ENCODE measurements at regions of chr22 and their contacts with region 1.

Region 1: GRCh38 chr22:49827853-49828598 is at the start of gene BRD1:
- DNase-seq: peak; percentile 65
- H3K4me3 Mint-ChIP-seq: peak within 1 kb of the TSS; percentile 85
- H3K27ac Mint-ChIP-seq: peak within 1 kb of the TSS; percentile 71
- H3K4me1 Mint-ChIP-seq: peaks cover 22% of the 10 kb centered on the region
- H3K27me3 Mint-ChIP-seq: no peaks in the 10 kb centered on the region
- CTCF ChIP-seq: no peak
- total RNA-seq, gene BRD1: 38.8 and 41.4 TPM in 2 replicates

Region 2: GRCh38 chr22:49776891-49777290 is 51.1 kb before region 1 on chr22:
- CTCF ChIA-PET with region 1: no interaction called
- intact Hi-C with region 1: loop called (anchors 2 kb)
- DNase-seq: peak; percentile 81
- H3K4me3 Mint-ChIP-seq: no peak overlapping the region
- H3K27ac Mint-ChIP-seq: peak overlapping the region; percentile 30
- H3K4me1 Mint-ChIP-seq: no peaks in the 10 kb centered on the region
- H3K27me3 Mint-ChIP-seq: no peaks in the 10 kb centered on the region
- CTCF ChIP-seq: no peak